Sciatic nerve (tissue), 2 donors: ENCODE measurements at regions of chr12 and their contacts with region 1.

Region 1: GRCh38 chr12:70576346-70577282 is 60.6 kb downstream of the PTPRB start:
- DNase-seq: no peak
- ATAC-seq: peak; percentile 92

Region 2: GRCh38 chr12:69900720-69901131 is 675.9 kb before region 1 on chr12:
- intact Hi-C with region 1: loop called (anchors 2 kb)
- DNase-seq: peak; percentile 85
- ATAC-seq: peak; percentile 89

Region 3: DNA sequence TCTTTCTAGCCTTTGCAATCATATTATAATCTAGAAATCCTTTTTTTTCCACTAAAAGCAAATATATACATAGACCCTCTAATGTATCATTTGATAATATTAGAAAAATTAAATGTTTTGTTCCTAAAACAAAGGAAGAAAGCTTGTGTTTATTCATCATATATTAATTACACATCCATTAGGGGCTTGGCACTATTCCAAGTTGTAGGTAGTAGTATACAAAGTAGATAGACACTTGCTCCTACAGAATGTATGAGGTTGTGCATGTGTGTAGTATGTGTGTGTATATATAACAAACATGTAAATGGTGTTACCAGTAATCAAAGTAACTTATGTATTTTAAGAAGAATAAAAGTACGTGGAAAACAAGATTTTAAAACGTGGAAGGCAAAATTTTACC is 225.5 kb before region 1 on chr12:
- intact Hi-C with region 1: no loop called
- DNase-seq: no peak
- ATAC-seq: no peak

Region 4: DNA sequence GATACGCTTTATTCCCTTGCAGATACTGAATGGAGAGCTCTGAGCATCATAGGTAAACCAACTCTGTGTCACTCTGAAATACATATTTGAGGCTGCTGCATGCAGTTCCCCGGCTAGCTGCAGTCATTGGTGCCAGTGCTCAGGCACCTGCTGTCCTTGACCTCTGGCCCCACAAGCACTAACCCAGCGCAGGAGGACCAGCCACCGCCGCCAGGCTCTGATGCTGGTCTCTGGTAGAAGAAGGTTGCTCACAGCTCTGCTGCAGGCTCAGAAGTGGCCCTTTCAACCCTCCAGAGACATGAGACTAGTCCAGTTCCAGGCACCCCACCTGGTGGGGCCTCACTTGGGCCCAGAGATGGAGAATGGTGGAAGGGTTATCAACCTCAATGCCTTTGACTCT is 95.1 kb after region 1 on chr12:
- intact Hi-C with region 1: no loop called
- DNase-seq: no peak
- ATAC-seq: no peak